Activated CD4-positive, alpha-beta memory T cell treated with anti-CD3 and anti-CD28 coated beads for 36 hours (primary cell): ENCODE measurements at regions of chr7 and their contacts with region 1.

Region 1: DNA sequence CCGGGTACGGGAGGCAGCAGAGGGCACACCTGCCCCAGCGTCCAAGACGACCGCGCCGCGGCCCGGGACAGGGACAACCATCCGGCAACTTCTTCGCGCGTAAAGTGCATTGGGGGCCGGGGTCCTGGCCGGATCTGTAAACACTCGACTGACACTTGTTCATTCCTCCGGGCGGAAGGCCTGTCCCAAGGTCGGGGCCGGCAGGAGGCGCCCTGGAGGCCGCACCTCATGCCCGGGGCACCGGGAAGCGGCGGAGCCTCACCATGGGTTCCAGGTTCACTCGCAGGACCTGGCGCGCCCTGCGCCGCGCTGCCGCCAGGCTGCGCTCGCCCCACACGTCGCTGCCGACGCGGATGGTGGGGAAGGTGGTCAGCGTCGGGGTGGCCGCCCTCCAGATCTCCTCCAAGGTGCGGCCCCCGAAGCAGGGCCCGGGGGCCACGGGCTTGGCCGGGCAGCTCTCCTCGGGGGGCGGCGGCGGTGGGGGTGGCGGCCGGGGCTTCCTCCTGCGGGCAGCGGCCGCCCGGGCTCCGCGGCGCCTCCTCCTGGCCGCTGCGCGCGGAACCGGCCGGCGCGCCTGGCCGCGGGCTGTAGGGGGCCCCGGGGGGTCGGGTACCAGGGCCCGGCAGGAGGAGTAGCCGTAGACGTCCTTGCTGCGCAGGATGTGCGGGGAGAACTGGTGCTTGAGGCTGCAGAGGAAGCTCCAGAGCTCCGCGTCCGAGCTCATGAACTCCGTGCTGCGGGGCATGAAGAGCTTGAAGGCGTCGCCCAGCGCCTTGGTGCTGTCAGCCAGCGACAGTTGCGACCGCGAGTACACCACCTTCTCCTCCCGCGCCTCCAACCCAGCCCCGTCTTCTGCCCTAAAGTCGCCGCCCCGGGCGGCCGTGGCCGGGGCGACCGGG is 746 bp downstream of the CCDC71L start:
- DNase-seq: peak; percentile 91
- H3K4me3 Mint-ChIP-seq: peak overlapping the region; percentile 87
- H3K27ac Mint-ChIP-seq: peak overlapping the region; percentile 83
- H3K4me1 Mint-ChIP-seq: peaks cover 28% of the 10 kb centered on the region
- H3K27me3 Mint-ChIP-seq: no peaks in the 10 kb centered on the region

Region 2: GRCh38 chr7:105935249-105935648 is 725.0 kb before region 1 on chr7:
- CTCF ChIA-PET with region 1: no interaction called
- POLR2A ChIA-PET with region 1: no interaction called
- intact Hi-C with region 1: no loop called
- DNase-seq: no peak
- H3K4me3 Mint-ChIP-seq: no peak overlapping the region
- H3K27ac Mint-ChIP-seq: no peak overlapping the region
- H3K4me1 Mint-ChIP-seq: peaks cover 9% of the 10 kb centered on the region
- H3K27me3 Mint-ChIP-seq: no peaks in the 10 kb centered on the region

Region 3: GRCh38 chr7:106285051-106285854 is 375.0 kb before region 1 on chr7:
- CTCF ChIA-PET with region 1: no interaction called
- POLR2A ChIA-PET with region 1: no interaction called
- intact Hi-C with region 1: loop called (anchors 5 kb)
- DNase-seq: peak; percentile 100
- H3K4me3 Mint-ChIP-seq: peak overlapping the region; percentile 92
- H3K27ac Mint-ChIP-seq: peak overlapping the region; percentile 99
- H3K4me1 Mint-ChIP-seq: peaks cover 50% of the 10 kb centered on the region
- H3K27me3 Mint-ChIP-seq: peaks cover 2% of the 10 kb centered on the region

Region 4: GRCh38 chr7:106598663-106599342 is 61.4 kb before region 1 on chr7:
- CTCF ChIA-PET with region 1: interaction called, 13 read pairs
- POLR2A ChIA-PET with region 1: no interaction called
- intact Hi-C with region 1: loop called (anchors 5 kb)
- DNase-seq: peak; percentile 81
- H3K4me3 Mint-ChIP-seq: no peak overlapping the region
- H3K27ac Mint-ChIP-seq: no peak overlapping the region
- H3K4me1 Mint-ChIP-seq: peaks cover 4% of the 10 kb centered on the region
- H3K27me3 Mint-ChIP-seq: peaks cover 6% of the 10 kb centered on the region

Region 5: GRCh38 chr7:106717955-106718871 is 58.0 kb after region 1 on chr7:
- CTCF ChIA-PET with region 1: interaction called, 39 read pairs
- POLR2A ChIA-PET with region 1: interaction called, 3 read pairs
- intact Hi-C with region 1: loop called (anchors 1 kb)
- DNase-seq: peak; percentile 90
- H3K4me3 Mint-ChIP-seq: no peak overlapping the region
- H3K27ac Mint-ChIP-seq: no peak overlapping the region
- H3K4me1 Mint-ChIP-seq: peaks cover 12% of the 10 kb centered on the region
- H3K27me3 Mint-ChIP-seq: no peaks in the 10 kb centered on the region

Region 6: GRCh38 chr7:106744563-106745091 is 84.4 kb after region 1 on chr7:
- CTCF ChIA-PET with region 1: interaction called, 11 read pairs
- POLR2A ChIA-PET with region 1: no interaction called
- intact Hi-C with region 1: no loop called
- DNase-seq: peak; percentile 37
- H3K4me3 Mint-ChIP-seq: no peak overlapping the region
- H3K27ac Mint-ChIP-seq: no peak overlapping the region
- H3K4me1 Mint-ChIP-seq: peaks cover 4% of the 10 kb centered on the region
- H3K27me3 Mint-ChIP-seq: peaks cover 6% of the 10 kb centered on the region

Region 7: DNA sequence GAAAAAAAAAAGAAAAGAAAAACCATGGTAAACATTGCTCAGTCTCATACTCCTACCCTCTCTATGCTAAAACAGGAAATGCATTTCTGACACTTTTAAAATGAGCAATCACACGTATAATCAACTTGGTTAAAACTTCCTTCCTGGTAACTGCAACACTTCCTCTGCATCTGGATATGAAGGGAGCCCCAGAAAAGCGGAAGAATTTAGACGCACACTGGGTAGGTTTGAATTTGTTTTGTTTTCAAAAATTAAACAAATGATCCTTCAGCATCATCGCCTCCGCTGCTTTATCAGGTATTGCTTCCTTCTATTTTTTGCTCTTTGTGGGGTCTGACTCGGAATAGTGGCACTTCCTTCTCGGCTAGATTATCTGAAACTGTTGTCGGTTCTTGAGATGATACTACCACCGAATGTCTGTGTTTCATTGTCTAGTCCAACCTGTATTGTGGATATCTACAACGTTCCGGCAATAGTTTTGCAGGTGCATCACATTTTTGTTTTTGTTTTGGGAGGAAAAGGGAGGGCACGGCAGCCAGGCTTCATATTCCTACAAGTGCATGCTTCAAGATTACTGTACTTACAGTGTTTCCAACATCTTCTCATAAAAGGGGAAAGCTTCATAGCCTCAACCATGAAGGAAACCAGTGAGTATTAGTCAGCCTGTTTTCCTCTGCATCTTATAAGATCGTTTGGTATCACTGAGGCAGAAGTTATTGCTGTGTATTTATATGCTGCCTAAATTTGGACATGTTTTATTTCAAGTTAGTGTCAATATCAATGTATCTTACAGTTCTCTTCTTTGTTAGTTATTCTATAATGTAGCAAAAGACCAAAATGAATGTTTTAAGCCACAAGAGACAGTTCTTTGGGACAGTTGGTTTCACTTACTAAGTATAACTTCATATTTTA is 205.2 kb after region 1 on chr7 and contains the start of gene PIK3CG:
- CTCF ChIA-PET with region 1: interaction called, 6 read pairs
- POLR2A ChIA-PET with region 1: no interaction called
- intact Hi-C with region 1: loop called (anchors 5 kb)
- DNase-seq: no peak
- H3K4me3 Mint-ChIP-seq: peak within 1 kb of the TSS; percentile 83
- H3K27ac Mint-ChIP-seq: peak within 1 kb of the TSS; percentile 79
- H3K4me1 Mint-ChIP-seq: peaks cover 73% of the 10 kb centered on the region
- H3K27me3 Mint-ChIP-seq: no peaks in the 10 kb centered on the region
- total RNA-seq, gene PIK3CG: 10.9 to 11.3 TPM

Region 8: DNA sequence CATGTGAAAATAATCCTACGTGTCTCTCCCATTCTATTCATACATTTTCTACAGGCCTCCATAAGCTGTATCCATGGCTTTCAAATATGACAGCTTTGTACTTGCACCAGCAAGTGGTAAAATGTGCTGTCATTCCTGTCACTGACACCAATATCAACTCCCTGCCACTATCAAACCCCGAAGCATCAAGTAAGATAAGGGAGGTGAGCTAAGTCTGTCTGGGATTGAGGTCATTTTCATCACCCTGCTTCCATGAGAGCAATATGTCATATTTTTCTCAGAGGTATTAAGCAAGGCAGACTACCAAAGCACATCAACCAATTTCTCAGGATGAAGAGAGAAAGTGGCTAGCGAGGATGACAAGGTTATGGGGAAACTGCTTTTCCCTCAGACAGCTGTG is 820.7 kb after region 1 on chr7:
- CTCF ChIA-PET with region 1: no interaction called
- POLR2A ChIA-PET with region 1: no interaction called
- intact Hi-C with region 1: no loop called
- DNase-seq: no peak
- H3K4me3 Mint-ChIP-seq: no peak overlapping the region
- H3K27ac Mint-ChIP-seq: no peak overlapping the region
- H3K4me1 Mint-ChIP-seq: peaks cover 8% of the 10 kb centered on the region
- H3K27me3 Mint-ChIP-seq: no peaks in the 10 kb centered on the region